A549 (cell line): ENCODE measurements at regions of chr3 and their contacts with region 1.

Region 1: GRCh38 chr3:37855363-37855970 is 6.2 kb upstream of the CTDSPL start:
- DNase-seq: peak; percentile 66 to 73
- ATAC-seq: peak; percentile 73 to 84
- H3K4me3 ChIP-seq: no peak overlapping the region
- H3K27ac ChIP-seq: no peak overlapping the region
- H3K4me1 ChIP-seq: peaks cover 6% of the 10 kb centered on the region; the same call in 1 of the 3 replicates
- CTCF ChIP-seq: peak; percentile 96
- EP300 ChIP-seq: no peak
- POLR2A ChIP-seq: no peak
- RAD21 ChIP-seq: peak; percentile 95 to 97

Region 2: GRCh38 chr3:37833302-37834186 is 21.9 kb before region 1 on chr3:
- CTCF ChIA-PET with region 1: interaction called, 12 read pairs
- POLR2A ChIA-PET with region 1: no interaction called
- DNase-seq: peak; percentile 10 to 36
- ATAC-seq: peak; percentile 85 to 88
- H3K4me3 ChIP-seq: no peak overlapping the region
- H3K27ac ChIP-seq: no peak overlapping the region
- H3K4me1 ChIP-seq: no peaks in the 10 kb centered on the region
- CTCF ChIP-seq: 0 out of 3 replicates have a peak, but pooled peaks have one; percentile 7
- EP300 ChIP-seq: no peak
- POLR2A ChIP-seq: no peak
- RAD21 ChIP-seq: peak in 1 of 2 experiments; percentile 34; a peak in 1 of 5 replicates

Region 3: DNA sequence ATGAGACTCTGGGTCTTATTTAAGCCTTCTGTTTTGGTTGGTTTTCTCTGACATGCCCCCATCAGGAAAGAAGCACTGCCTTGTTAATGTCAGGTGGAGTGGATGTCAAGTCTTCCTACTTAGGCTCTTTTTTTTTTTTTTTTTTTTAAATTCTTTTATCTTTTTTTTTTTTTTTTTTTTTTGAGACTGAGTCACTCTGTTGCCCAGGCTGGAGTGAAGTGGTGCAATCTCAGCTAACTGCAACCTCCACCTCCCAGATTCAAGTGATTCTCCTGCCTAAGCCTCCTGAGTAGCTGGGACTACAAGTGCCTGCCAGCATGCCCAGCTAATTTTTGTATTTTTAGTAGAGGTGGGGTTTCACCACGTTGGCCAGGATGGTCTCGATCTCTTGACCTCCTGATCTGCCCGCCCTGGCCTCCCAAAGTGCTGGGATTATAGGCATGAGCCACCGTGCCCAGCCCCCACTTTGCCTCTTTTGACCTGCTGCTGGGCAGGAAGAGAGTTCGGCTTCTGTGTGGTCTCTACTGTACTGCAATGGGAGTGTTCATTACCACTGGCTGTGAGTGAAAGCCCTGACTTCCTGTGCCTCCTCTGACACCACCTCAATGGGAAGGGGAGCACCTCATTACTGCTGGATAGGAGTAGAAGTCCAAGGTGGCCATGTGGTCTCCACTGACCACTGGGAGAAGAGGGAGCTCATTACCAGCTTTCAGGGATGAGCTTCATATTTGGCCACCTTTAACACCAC is 17.1 kb after region 1 on chr3:
- CTCF ChIA-PET with region 1: interaction called, 28 read pairs
- POLR2A ChIA-PET with region 1: interaction called, 4 read pairs
- DNase-seq: no peak
- ATAC-seq: no peak
- H3K4me3 ChIP-seq: no peak overlapping the region
- H3K27ac ChIP-seq: no peak overlapping the region
- H3K4me1 ChIP-seq: no peaks in the 10 kb centered on the region
- CTCF ChIP-seq: no peak
- EP300 ChIP-seq: no peak
- POLR2A ChIP-seq: no peak
- RAD21 ChIP-seq: no peak

Region 4: GRCh38 chr3:37892927-37893600 is 37.6 kb after region 1 on chr3:
- CTCF ChIA-PET with region 1: interaction called, 10 read pairs
- POLR2A ChIA-PET with region 1: no interaction called
- DNase-seq: no peak
- ATAC-seq: peak; percentile 42 to 50; a peak in 1 of 6 replicates
- H3K4me3 ChIP-seq: no peak overlapping the region
- H3K27ac ChIP-seq: no peak overlapping the region
- H3K4me1 ChIP-seq: peaks cover 12% of the 10 kb centered on the region
- CTCF ChIP-seq: no peak
- EP300 ChIP-seq: no peak
- POLR2A ChIP-seq: no peak
- RAD21 ChIP-seq: no peak

Region 5: GRCh38 chr3:37925157-37925556 is 69.7 kb after region 1 on chr3:
- CTCF ChIA-PET with region 1: no interaction called
- POLR2A ChIA-PET with region 1: no interaction called
- DNase-seq: no peak
- ATAC-seq: no peak; a peak in 1 of 6 replicates
- H3K4me3 ChIP-seq: no peak overlapping the region
- H3K27ac ChIP-seq: no peak overlapping the region
- H3K4me1 ChIP-seq: no peaks in the 10 kb centered on the region
- CTCF ChIP-seq: no peak
- EP300 ChIP-seq: no peak
- POLR2A ChIP-seq: no peak
- RAD21 ChIP-seq: no peak

Region 6: GRCh38 chr3:37937156-37937555 is 81.7 kb after region 1 on chr3:
- CTCF ChIA-PET with region 1: interaction called, 11 read pairs
- POLR2A ChIA-PET with region 1: no interaction called
- DNase-seq: no peak
- ATAC-seq: no peak
- H3K4me3 ChIP-seq: no peak overlapping the region
- H3K27ac ChIP-seq: peak overlapping the region; percentile 62 to 63; a peak in 3 of 6 replicates
- H3K4me1 ChIP-seq: peaks cover 32% of the 10 kb centered on the region
- CTCF ChIP-seq: no peak
- EP300 ChIP-seq: no peak
- POLR2A ChIP-seq: no peak
- RAD21 ChIP-seq: no peak

Region 7: DNA sequence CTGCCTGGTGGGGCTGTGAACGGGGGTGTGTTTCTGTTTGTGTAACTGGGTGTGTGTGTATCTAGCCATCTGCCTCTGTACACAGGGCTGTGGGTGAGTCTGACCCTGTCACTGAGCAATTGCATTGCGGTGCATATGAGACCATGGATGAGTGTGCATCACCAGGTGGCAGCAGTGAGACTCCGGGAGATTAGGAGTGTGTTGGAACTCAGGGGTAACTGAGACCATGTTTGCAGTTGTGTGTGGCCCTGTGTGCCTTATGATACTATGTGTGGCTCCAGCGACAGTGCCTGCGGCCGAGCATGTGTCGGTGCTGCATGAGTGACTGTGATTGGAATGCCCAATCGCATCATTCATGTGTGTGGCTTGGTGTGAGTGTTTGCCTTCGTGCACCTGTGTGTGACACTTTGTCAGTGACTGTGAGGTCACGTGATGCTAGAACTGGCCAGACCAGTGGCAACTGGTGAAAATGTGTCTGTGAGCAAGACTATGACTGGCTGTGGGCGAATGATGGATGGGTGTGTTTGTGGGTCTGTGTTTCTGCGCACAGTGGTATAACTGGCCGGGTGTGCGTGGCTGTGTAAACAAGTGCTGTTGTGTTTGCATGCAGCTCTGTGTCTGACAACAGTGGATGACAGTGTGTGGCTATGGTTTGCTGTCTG is 149.1 kb after region 1 on chr3:
- CTCF ChIA-PET with region 1: interaction called, 52 read pairs
- POLR2A ChIA-PET with region 1: no interaction called
- DNase-seq: peak; percentile 55 to 76
- ATAC-seq: peak; percentile 75 to 88
- H3K4me3 ChIP-seq: no peak overlapping the region
- H3K27ac ChIP-seq: no peak overlapping the region
- H3K4me1 ChIP-seq: peaks cover 4% of the 10 kb centered on the region; the same call in 1 of the 3 replicates
- CTCF ChIP-seq: peak; percentile 72
- EP300 ChIP-seq: no peak
- POLR2A ChIP-seq: no peak
- RAD21 ChIP-seq: peak; percentile 51 to 62

Region 8: DNA sequence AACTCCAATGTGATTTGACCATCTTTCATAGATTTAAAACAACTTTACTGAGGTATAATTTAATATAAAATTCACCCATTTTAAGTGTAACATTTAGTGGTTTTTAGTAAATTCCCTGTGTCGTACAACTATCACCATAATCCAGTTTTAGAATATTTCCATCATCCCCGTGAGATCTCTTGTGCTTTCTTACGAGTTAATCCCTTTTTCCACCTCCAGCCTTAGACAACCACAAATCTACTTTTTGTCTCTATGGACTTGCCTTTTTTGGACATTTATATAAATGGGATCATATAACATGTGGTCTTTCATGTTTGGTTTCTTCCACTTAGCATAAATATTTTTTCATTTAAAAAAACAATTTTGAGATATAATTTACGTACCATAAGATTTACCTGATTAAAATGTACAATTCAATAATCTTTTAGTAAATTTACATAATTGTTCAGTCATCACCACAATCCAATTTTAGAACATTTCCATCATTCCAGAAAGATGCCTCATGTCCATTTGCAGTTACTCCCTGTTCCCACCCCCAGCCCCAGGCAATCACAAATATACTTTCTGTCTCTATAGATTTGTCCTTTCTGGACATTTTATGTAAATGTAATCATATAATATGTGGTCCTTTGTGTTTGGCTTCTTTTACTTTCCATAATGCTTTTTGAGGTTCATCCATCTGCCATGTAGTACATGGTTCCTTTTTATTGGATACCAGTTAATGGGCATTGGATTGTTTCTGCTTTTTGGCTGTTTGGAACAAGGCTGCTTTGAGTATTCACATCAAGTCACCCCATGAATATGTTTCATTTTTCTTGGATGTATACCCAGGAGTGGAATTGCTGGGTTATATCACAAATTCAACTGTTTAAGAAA is 312.9 kb after region 1 on chr3:
- CTCF ChIA-PET with region 1: no interaction called
- POLR2A ChIA-PET with region 1: no interaction called
- DNase-seq: no peak
- ATAC-seq: no peak
- H3K4me3 ChIP-seq: no peak overlapping the region
- H3K27ac ChIP-seq: no peak overlapping the region
- H3K4me1 ChIP-seq: peaks cover 39% of the 10 kb centered on the region
- CTCF ChIP-seq: no peak
- EP300 ChIP-seq: no peak
- POLR2A ChIP-seq: no peak
- RAD21 ChIP-seq: no peak